ENCODE measurements at regions of chr9 and their contacts with region 1.

Region 1: GRCh38 chr9:98118640-98119601 is at the start of gene TRIM14:
- DNase-seq: peak; percentile 69
- ATAC-seq: peak; percentile 88
- H3K4me3 ChIP-seq: peak within 1 kb of the TSS; percentile 57 to 87 (median 81)
- H3K27ac ChIP-seq: peak within 1 kb of the TSS; percentile 81
- H3K4me1 ChIP-seq: peaks cover 19% of the 10 kb centered on the region
- H3K27me3 ChIP-seq: no peaks in the 10 kb centered on the region
- CTCF ChIP-seq: peak; percentile 86
- EP300 ChIP-seq: no peak
- POLR2A ChIP-seq: peak; percentile 41 to 46; a peak in 3 of 4 replicates
- RAD21 ChIP-seq: peak; percentile 76
- total RNA-seq, gene TRIM14: 13.0 and 13.8 TPM in 2 replicates

Region 2: DNA sequence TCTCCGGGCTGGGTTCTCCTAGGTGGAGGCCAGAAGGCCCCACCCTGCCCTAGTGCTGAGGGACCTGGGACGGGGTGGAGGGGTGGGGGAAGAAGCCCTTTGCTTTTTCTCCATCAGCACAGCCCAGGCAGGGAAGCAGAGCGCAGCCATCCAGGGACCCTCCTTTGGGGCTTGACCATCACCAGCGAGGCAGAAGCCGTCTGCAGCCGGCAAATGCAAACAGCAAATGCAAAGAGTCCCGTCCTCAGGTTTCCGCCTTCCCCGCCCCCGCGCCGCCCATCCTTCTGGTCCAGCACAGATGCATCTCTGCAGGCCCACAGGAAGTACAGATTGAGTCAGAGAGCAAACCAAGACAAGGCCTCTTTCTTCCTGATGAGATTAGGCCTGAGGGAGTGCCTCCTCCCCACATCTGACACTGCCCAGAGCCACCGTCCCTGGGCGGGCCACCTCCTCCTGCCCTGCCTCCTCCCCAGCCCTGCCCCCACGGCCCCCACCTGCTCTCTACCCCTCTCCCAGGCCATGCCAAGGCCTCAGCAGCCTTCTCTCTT is 50.1 kb after region 1 on chr9:
- CTCF ChIA-PET with region 1: no interaction called
- POLR2A ChIA-PET with region 1: no interaction called
- in situ Hi-C with region 1: no loop called
- intact Hi-C with region 1: loop called (anchors 10 kb)
- DNase-seq: peak; percentile 85
- ATAC-seq: peak; percentile 94
- H3K4me3 ChIP-seq: no peak overlapping the region
- H3K27ac ChIP-seq: peak overlapping the region; percentile 21
- H3K4me1 ChIP-seq: peaks cover 63% of the 10 kb centered on the region
- H3K27me3 ChIP-seq: no peaks in the 10 kb centered on the region
- CTCF ChIP-seq: no peak; the same call in 1 of the 2 replicates
- EP300 ChIP-seq: peak in 1 of 2 experiments; percentile 58; a peak in 1 of 4 replicates
- POLR2A ChIP-seq: no peak
- RAD21 ChIP-seq: no peak

Region 3: DNA sequence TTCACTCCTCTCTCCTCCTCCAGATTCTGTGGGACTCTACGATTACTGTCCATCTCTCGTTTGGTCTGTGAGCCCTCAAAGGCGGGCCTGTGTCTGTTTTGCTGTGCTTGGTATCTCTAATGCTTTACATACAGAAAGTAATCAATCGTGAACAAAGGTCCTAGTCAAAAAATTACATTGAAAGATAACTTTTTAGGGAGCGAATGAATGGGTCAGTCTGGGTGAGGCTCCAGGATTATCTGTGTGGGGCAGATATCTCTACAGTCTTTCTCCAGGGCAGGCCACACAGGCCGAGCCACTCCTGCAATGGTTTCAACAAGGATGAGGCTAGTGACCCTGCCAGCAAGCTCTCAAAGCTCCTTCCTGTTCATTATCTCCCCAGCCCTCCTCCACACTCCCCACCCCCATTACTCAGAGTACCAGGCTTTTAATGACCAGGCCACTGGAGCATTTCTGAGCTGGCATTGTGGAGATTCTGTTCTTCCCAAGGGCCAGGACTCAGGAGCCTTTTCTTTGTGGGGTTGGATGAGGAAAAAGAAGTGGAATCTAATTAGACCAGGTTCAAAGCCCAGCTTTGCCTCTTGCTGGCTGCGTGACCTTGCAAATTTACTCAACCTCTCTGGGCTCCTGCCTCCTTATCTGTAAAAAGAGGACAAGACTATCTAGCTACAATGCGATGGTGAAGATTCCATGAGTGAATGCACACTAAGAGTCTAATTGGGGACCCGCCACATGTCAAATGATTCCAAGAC is 63.3 kb after region 1 on chr9:
- CTCF ChIA-PET with region 1: no interaction called
- POLR2A ChIA-PET with region 1: interaction called, 16 read pairs
- in situ Hi-C with region 1: no loop called
- intact Hi-C with region 1: no loop called
- DNase-seq: no peak
- ATAC-seq: peak; percentile 75
- H3K4me3 ChIP-seq: peak overlapping the region in 1 of 3 experiments; percentile 48; a peak in 1 of 6 replicates
- H3K27ac ChIP-seq: peak overlapping the region; percentile 89
- H3K4me1 ChIP-seq: peaks cover 65% of the 10 kb centered on the region
- H3K27me3 ChIP-seq: no peaks in the 10 kb centered on the region
- CTCF ChIP-seq: no peak
- EP300 ChIP-seq: no peak
- POLR2A ChIP-seq: no peak
- RAD21 ChIP-seq: no peak

Region 4: DNA sequence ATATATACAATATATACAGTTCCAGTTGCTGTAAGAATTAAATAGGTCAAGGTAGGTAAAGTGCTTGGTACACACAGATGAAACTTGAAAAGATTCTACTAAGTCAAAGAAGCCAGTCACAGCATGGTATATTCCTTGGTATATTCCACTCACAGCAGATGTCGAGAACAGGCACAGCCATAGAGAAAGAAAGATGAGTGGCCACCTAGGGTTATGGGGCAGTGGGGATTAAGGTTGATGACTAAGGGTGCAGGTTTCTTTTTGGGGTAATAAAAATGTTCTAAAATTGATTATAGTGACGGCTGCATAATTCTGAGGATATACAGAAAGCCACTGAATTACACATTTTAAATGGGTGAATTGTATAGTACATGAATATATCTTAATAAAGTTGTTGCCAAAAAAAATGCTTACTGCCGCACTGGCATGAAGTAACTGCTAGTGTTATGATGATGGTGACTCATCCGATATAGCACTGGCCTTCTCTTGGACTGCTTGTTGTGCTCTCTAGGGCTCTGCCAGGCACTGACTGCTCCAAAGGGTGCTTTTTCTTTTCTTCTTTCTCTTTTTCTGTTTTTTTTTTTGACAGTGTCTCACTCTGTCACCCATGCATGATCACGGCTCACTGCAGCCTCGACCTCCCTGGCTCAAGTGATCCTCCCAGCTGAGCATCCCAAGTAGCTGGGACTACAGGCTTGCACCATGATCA is 113.0 kb after region 1 on chr9:
- CTCF ChIA-PET with region 1: no interaction called
- POLR2A ChIA-PET with region 1: interaction called, 12 read pairs
- in situ Hi-C with region 1: no loop called
- intact Hi-C with region 1: no loop called
- DNase-seq: no peak
- ATAC-seq: no peak
- H3K4me3 ChIP-seq: no peak overlapping the region
- H3K27ac ChIP-seq: no peak overlapping the region
- H3K4me1 ChIP-seq: peaks cover 45% of the 10 kb centered on the region
- H3K27me3 ChIP-seq: no peaks in the 10 kb centered on the region
- CTCF ChIP-seq: no peak
- EP300 ChIP-seq: no peak
- POLR2A ChIP-seq: no peak
- RAD21 ChIP-seq: no peak

Region 5: DNA sequence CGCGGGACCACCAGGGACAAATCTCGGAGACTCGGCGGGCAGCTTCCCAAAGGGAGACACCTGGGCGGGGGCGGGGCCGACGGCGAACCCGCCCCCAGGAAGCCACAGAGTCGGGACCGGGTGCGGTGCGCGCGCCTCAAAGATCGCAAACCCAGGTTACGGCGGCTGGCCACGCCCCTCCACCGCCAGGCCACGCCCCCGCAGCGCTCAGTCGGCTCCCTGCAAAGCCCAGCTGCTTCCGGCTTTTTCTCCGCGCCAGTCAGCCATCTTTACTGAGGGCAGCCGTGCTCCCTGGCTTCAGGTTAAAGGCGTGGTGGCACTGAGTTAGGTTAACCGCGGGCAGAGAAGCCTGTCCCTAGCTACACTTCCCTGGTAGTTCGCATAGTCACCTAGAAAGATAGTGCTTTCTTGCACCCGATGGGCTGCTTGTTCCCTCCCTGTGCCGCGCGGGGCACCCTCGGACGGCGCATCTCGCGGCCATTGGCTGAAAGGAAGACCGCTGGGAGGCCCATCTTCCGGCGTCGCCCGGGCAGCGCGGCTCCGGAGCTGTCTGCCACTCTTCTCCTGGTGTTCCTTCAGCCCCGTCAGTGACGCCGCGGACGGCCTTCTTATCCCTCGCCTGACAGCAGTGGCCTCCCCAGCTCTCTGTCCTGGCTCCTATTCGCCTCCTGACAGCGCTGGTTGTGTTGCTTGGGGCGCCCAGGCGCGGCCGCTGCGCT is 136.8 kb after region 1 on chr9 and contains the start of gene TBC1D2:
- CTCF ChIA-PET with region 1: no interaction called
- POLR2A ChIA-PET with region 1: interaction called, 27 read pairs
- in situ Hi-C with region 1: no loop called
- intact Hi-C with region 1: no loop called
- DNase-seq: peak; percentile 85
- ATAC-seq: peak; percentile 93
- H3K4me3 ChIP-seq: peak within 1 kb of the TSS; percentile 88 to 92 (median 89)
- H3K27ac ChIP-seq: peak within 1 kb of the TSS; percentile 87
- H3K4me1 ChIP-seq: peaks cover 29% of the 10 kb centered on the region
- H3K27me3 ChIP-seq: no peaks in the 10 kb centered on the region; a peak in 1 of 5 replicates
- CTCF ChIP-seq: peak; percentile 27; the same call in 1 of the 2 replicates
- EP300 ChIP-seq: peak in 1 of 2 experiments; percentile 11; a peak in 1 of 4 replicates
- POLR2A ChIP-seq: peak; percentile 52 to 80; a peak in 3 of 4 replicates
- RAD21 ChIP-seq: no peak; the same call in 1 of the 2 replicates
- total RNA-seq, gene TBC1D2: 2.2 and 2.8 TPM in 2 replicates

Region 6: DNA sequence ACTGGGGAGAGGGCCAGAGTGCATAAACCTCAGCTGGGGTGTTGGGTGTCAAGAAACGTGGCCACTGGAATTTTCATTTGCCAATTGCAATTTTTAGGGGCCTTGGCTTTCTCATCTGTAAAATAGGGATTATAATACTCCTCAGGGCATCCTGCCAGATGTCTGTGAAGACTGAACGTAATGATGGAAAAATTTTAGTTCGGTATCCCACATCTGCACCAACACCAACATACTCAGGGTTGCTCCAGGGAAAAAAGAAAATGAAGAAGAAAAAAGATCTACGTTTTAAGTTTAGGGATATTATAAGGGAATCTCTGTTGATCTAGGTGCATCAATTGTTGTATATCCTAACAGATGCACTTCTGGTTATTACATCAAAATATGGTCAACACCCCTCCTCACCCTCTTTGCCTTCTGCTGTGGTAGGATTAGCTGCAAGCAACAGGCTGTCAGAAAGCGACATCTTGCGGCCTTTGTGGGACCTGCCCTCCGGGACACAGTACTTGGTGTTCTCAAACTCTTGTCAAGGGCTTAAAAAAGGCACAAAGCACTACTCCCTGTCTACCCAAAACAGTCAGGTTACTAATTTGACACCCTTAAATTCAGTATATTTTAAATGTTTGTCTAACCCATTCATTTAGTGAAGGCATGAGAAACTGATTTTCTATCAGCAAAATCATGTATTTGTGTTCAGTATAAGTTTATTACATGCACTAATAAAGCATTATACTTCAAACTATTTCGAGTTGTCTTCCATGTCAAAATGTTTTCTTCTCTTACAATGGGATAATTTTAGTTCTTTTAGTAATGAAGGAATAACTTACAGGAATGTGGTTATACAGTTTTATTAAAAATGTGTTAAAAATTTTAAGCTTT is 144.8 kb after region 1 on chr9:
- CTCF ChIA-PET with region 1: no interaction called
- POLR2A ChIA-PET with region 1: no interaction called
- in situ Hi-C with region 1: no loop called
- intact Hi-C with region 1: loop called (anchors 2 kb)
- DNase-seq: peak; percentile 61
- ATAC-seq: peak; percentile 100
- H3K4me3 ChIP-seq: no peak overlapping the region
- H3K27ac ChIP-seq: no peak overlapping the region
- H3K4me1 ChIP-seq: peaks cover 18% of the 10 kb centered on the region
- H3K27me3 ChIP-seq: peaks cover 0 to under 1% of the 10 kb centered on the region in 2 experiments; a peak in 1 of 5 replicates
- CTCF ChIP-seq: peak; percentile 95
- EP300 ChIP-seq: no peak
- POLR2A ChIP-seq: no peak
- RAD21 ChIP-seq: peak; percentile 88